HCT116 (cell line): ENCODE measurements at regions of chr4 and their contacts with region 1.

Region 1: DNA sequence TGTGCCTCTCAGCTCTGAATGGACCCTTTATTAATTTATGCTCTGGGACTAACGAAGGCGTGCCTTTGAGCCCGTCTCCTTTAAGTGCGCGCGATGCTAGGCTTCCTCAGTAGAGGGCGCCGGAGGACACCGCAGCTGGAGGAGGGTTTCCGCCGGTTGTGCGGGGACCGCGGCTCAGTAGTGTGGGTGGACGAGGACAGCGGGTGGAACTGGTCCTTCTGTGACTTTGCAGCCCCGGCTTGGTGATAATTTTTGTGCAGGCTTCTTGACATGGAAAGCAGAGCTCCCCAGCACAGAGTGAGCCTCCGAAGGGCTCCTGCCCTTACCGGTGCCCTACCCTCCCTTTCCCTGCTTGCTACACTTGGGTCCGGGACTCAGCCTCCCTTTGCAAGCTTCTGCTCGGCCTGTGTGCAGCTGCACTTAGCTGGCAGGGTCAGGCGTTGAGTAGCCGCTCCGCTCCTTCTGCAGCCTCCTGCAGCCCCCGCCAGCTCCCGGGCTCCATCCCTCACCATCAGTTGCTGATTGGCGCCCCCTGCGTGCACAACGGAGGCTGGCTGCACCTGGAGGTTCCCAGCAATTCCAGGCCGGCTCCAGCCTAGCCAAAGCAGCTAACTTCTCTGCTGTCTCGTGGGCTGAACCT is 26.8 kb upstream of the BOD1L1 start:
- DNase-seq: no peak
- ATAC-seq: peak; percentile 96
- H3K4me3 ChIP-seq: peak overlapping the region; percentile 40 to 53
- H3K27ac ChIP-seq: no peak overlapping the region
- H3K4me1 ChIP-seq: peaks cover 0 to 10% of the 10 kb centered on the region in 2 experiments; a peak in 3 of 4 replicates
- H3K27me3 ChIP-seq: 0 out of 2 replicates have a peak, but pooled peaks cover 3% of the 10 kb centered on the region
- CTCF ChIP-seq: peak; percentile 63 to 93 (median 76)
- POLR2A ChIP-seq: no peak
- RAD21 ChIP-seq: peak; percentile 60

Region 2: GRCh38 chr4:12729384-12729783 is 924.9 kb before region 1 on chr4:
- CTCF ChIA-PET with region 1: interaction called, 3 read pairs
- POLR2A ChIA-PET with region 1: no interaction called
- RAD21 ChIA-PET with region 1: no interaction called
- intact Hi-C with region 1: loop called (anchors 5 kb)
- DNase-seq: peak; percentile 33
- ATAC-seq: peak; percentile 57; the same call in 1 of the 2 replicates
- H3K4me3 ChIP-seq: no peak overlapping the region
- H3K27ac ChIP-seq: no peak overlapping the region
- H3K4me1 ChIP-seq: no peaks in the 10 kb centered on the region
- H3K27me3 ChIP-seq: no peaks in the 10 kb centered on the region
- CTCF ChIP-seq: peak; percentile 9 to 39 (median 21); a peak in 2 of 6 replicates
- POLR2A ChIP-seq: no peak
- RAD21 ChIP-seq: peak; percentile 62

Region 3: DNA sequence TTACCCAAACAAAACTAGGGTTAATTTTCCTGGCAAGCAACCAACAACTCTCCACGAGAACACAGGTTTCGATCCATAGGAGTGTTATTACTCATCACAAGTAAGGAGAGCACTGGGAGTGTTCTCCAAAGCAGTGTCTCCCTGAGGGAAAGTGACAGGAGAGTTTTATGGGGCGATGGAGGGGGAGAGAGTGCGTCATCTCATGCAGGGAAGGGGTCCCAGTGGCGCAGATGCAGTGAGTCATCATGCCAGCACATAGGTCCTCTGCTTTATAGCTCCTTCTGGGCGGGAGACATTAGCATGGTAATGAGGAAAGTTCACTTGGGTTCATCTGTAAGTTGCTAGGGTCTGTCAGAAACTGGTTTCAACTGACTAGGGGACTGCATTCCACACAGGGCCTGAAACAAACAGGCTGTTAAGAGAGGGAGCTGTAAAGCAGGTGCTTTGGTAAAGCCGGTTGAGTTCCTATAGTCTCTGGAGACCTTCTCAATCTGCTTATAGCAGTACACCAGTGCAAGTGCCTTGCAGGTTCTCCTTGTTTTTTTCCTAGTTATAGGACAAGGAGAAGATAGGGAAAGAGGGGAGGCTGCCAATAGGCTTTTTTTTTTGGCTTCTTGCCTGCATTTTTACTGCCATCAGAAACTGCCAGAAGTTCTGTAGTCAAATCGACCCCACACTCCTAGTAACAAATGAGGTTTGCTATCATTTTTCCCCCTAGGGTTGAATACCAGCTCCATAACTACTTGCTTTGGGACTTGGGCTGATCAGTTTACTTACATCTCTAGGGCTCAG is 13.9 kb before region 1 on chr4:
- CTCF ChIA-PET with region 1: interaction called, 14 read pairs
- POLR2A ChIA-PET with region 1: interaction called, 3 read pairs
- RAD21 ChIA-PET with region 1: no interaction called
- intact Hi-C with region 1: no loop called
- DNase-seq: no peak
- ATAC-seq: peak; percentile 38
- H3K4me3 ChIP-seq: peak overlapping the region in 1 of 2 experiments; percentile 14; a peak in 1 of 4 replicates
- H3K27ac ChIP-seq: no peak overlapping the region
- H3K4me1 ChIP-seq: peaks cover 0 to 11% of the 10 kb centered on the region in 2 experiments; a peak in 2 of 4 replicates
- H3K27me3 ChIP-seq: no peaks in the 10 kb centered on the region; the same call in 1 of the 2 replicates
- CTCF ChIP-seq: no peak
- POLR2A ChIP-seq: no peak
- RAD21 ChIP-seq: no peak

Region 4: GRCh38 chr4:14178421-14178820 is 524.1 kb after region 1 on chr4:
- CTCF ChIA-PET with region 1: no interaction called
- POLR2A ChIA-PET with region 1: no interaction called
- RAD21 ChIA-PET with region 1: no interaction called
- intact Hi-C with region 1: no loop called
- DNase-seq: no peak
- ATAC-seq: no peak
- H3K4me3 ChIP-seq: no peak overlapping the region
- H3K27ac ChIP-seq: no peak overlapping the region
- H3K4me1 ChIP-seq: no peaks in the 10 kb centered on the region
- H3K27me3 ChIP-seq: no peaks in the 10 kb centered on the region
- CTCF ChIP-seq: no peak
- POLR2A ChIP-seq: no peak
- RAD21 ChIP-seq: no peak

Region 5: GRCh38 chr4:14787894-14788293 is 1133.6 kb after region 1 on chr4:
- CTCF ChIA-PET with region 1: no interaction called
- POLR2A ChIA-PET with region 1: no interaction called
- RAD21 ChIA-PET with region 1: no interaction called
- intact Hi-C with region 1: loop called (anchors 10 kb)
- DNase-seq: no peak
- ATAC-seq: peak; percentile 70
- H3K4me3 ChIP-seq: no peak overlapping the region
- H3K27ac ChIP-seq: no peak overlapping the region
- H3K4me1 ChIP-seq: no peaks in the 10 kb centered on the region
- H3K27me3 ChIP-seq: no peaks in the 10 kb centered on the region
- CTCF ChIP-seq: peak; percentile 4 to 58 (median 55); a peak in 4 of 6 replicates
- POLR2A ChIP-seq: no peak
- RAD21 ChIP-seq: peak; percentile 42

Region 6: DNA sequence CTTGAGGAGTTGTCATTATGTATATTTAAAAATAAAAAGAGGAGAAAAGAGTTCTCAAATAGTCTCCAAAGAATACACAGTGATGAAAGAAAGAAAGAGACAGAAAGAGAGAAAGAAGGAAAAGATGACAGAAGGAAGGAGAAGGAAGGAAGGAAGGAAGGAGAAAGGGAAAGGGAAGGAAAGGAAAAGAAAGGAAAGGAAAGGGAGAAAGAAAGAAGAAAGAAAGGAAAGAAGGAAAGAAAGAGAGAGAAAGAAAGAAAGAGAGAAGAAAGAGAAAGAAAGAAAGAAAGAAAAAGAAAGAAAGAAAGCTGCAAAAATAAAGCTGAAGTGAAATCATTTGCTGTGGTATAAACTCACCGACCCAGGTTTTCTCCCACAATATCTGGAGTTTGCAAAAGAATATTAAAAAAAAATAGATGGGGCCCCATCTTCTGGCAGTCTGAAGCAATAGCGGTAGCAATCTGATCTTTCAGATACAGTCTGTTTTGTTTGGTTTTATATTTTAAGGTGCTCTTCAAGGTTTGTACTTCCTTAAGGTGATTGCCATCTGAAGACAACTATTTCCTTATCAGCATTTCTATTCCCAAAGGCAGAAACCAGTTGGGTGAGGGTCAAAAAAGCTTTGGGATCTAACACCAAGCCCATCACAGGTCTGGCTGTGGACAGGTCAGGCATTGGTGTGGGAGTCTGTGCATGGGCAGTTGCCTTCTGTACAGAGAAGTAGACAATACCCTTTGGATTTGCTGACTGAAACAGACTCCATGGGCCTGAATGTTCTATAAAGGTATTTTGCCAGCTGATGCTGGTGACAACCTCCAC is 1508.4 kb after region 1 on chr4:
- CTCF ChIA-PET with region 1: interaction called, 3 read pairs
- POLR2A ChIA-PET with region 1: no interaction called
- RAD21 ChIA-PET with region 1: no interaction called
- intact Hi-C with region 1: loop called (anchors 5 kb)
- DNase-seq: no peak
- ATAC-seq: peak; percentile 66
- H3K4me3 ChIP-seq: no peak overlapping the region
- H3K27ac ChIP-seq: no peak overlapping the region
- H3K4me1 ChIP-seq: peaks cover 0 to 5% of the 10 kb centered on the region in 2 experiments; a peak in 1 of 4 replicates
- H3K27me3 ChIP-seq: 0 out of 2 replicates have a peak, but pooled peaks cover 5% of the 10 kb centered on the region
- CTCF ChIP-seq: peak; percentile 25 to 51 (median 39); a peak in 5 of 6 replicates
- POLR2A ChIP-seq: no peak
- RAD21 ChIP-seq: peak; percentile 59